CD14-positive monocyte (primary cell): ENCODE measurements at regions of chr15 and their contacts with region 1.

Region 1: GRCh38 chr15:101277038-101277882 is at the start of gene SELENOS:
- DNase-seq: peak; percentile 84 to 88 (median 88)
- H3K4me3 ChIP-seq: peak within 1 kb of the TSS; percentile 78 to 89 (median 80)
- H3K4me3 Mint-ChIP-seq: peak within 1 kb of the TSS; percentile 96 to 98
- H3K27ac ChIP-seq: peak within 1 kb of the TSS; percentile 91 to 92
- H3K27ac Mint-ChIP-seq: peak within 1 kb of the TSS; percentile 96 to 98 (median 98)
- H3K4me1 ChIP-seq: peaks cover 17 to 20% of the 10 kb centered on the region in 2 donors
- H3K4me1 Mint-ChIP-seq: peaks cover 20% of the 10 kb centered on the region
- H3K27me3 ChIP-seq: no peaks in the 10 kb centered on the region
- H3K27me3 Mint-ChIP-seq: peaks cover 0 to 5% (median 0%) of the 10 kb centered on the region in 3 donors
- CTCF ChIP-seq: no peak
- polyA plus RNA-seq, gene SELENOS: 40.2 to 70.2 (median 51.6) TPM

Region 2: GRCh38 chr15:100602064-100602822 is 675.0 kb before region 1 on chr15 and contains the starts of genes ASB7 and LINS1:
- intact Hi-C with region 1: loop called in 1 of 2 experiments (anchors 10 kb)
- DNase-seq: peak; percentile 100
- H3K4me3 ChIP-seq: peak within 1 kb of the TSS; percentile 89 to 97 (median 97)
- H3K4me3 Mint-ChIP-seq: no peak within 1 kb of the TSS
- H3K27ac ChIP-seq: peak within 1 kb of the TSS; percentile 68 to 86
- H3K27ac Mint-ChIP-seq: peak within 1 kb of the TSS in 6 of 7 donors; percentile 50 to 97 (median 92)
- H3K4me1 ChIP-seq: peaks cover 18 to 38% of the 10 kb centered on the region in 2 donors
- H3K4me1 Mint-ChIP-seq: peaks cover 26% of the 10 kb centered on the region
- H3K27me3 ChIP-seq: no peaks in the 10 kb centered on the region
- H3K27me3 Mint-ChIP-seq: peaks cover 0 to 1% (median 0%) of the 10 kb centered on the region in 3 donors
- CTCF ChIP-seq: no peak
- polyA plus RNA-seq, gene ASB7: 5.3 to 9.8 (median 7.6) TPM
- polyA plus RNA-seq, gene LINS1: 4.2 to 8.8 (median 7.6) TPM

Region 3: GRCh38 chr15:101105059-101105891 is 172.0 kb before region 1 on chr15:
- intact Hi-C with region 1: no loop called
- DNase-seq: no peak
- H3K4me3 ChIP-seq: no peak overlapping the region
- H3K4me3 Mint-ChIP-seq: no peak overlapping the region
- H3K27ac ChIP-seq: no peak overlapping the region
- H3K27ac Mint-ChIP-seq: no peak overlapping the region
- H3K4me1 ChIP-seq: no peaks in the 10 kb centered on the region
- H3K4me1 Mint-ChIP-seq: no peaks in the 10 kb centered on the region
- H3K27me3 ChIP-seq: no peaks in the 10 kb centered on the region
- H3K27me3 Mint-ChIP-seq: peaks cover 2 to 11% (median 5%) of the 10 kb centered on the region in 3 donors
- CTCF ChIP-seq: no peak

Region 4: DNA sequence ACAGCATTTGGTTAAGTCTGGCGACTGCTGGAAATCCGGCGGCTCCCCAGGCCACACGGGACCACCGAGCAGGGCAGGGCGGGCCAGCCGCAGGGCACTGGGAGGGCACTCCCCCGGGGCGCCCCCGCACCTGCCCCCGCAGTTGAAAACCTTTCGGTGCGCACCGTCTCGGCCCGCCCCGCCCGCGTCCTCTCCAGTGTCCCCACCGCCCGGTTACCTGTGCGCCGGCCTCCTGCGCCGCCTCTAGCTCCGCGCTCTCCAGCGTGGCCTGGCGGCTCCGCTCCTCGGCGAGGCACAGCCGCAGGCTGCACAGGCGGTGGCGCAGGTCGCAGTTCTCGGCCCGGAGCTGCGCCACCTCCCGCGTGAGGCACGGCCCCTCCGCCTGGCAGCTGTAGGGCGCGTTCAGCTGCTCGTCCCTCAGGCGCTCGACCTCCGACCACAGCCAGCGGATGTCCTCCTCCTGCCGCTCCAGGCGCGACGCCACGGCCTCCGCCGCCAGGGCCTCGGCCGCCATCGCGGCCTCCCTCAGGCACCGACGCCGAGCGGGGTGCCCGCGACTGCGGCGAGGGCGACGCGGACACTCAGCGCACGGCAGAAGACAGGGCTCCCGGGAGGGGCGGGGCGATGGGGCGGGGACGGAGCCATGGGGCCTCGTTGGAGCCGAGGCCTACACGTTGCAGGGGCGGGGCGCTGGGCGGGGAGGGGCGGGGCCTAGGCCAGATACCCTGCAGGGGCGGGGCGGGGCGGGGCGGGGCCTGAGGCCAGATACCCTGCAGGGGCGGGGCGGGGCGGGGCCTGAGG is 446.8 kb after region 1 on chr15 and contains the start of gene TARS3:
- intact Hi-C with region 1: loop called in 1 of 2 experiments (anchors 2 kb)
- DNase-seq: peak; percentile 89 to 93 (median 90)
- H3K4me3 ChIP-seq: peak within 1 kb of the TSS; percentile 42 to 81 (median 75)
- H3K4me3 Mint-ChIP-seq: peak within 1 kb of the TSS; percentile 74 to 94
- H3K27ac ChIP-seq: peak within 1 kb of the TSS; percentile 42 to 80
- H3K27ac Mint-ChIP-seq: peak within 1 kb of the TSS in 5 of 7 donors; percentile 11 to 90 (median 64)
- H3K4me1 ChIP-seq: peaks cover 13 to 14% of the 10 kb centered on the region in 2 donors
- H3K4me1 Mint-ChIP-seq: peaks cover 15% of the 10 kb centered on the region
- H3K27me3 ChIP-seq: peaks cover 0 to 2% of the 10 kb centered on the region in 2 donors
- H3K27me3 Mint-ChIP-seq: peaks cover 0 to 3% (median 2%) of the 10 kb centered on the region in 3 donors
- CTCF ChIP-seq: no peak
- polyA plus RNA-seq, gene TARS3: 1.3 to 2.4 (median 1.8) TPM